ENCODE measurements at regions of chr10 and their contacts with region 1.

Region 1: GRCh38 chr10:16817125-16818019 is at the start of gene RSU1:
- DNase-seq: peak; percentile 97
- CTCF ChIP-seq: no peak

Region 2: DNA sequence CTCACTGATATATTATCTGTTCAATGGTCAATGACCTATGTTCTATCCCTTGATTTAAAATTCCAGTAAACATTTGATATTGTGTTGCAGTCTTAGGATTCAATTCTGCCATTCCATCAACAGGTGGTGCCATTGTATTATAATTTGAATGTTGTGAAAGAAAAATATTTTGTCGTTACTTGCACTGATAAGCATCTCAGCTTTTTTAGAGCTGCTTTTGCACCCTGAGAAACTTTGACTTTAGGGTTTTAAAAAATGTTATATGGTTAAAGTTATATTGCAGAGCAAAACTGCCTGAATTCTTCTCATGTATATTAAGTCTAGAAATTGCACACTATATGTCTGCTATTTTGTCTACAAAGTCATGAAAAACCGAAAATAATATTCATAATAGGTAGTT is 938.3 kb before region 1 on chr10:
- in situ Hi-C with region 1: loop called (anchors 25 kb)
- DNase-seq: peak; percentile 37
- CTCF ChIP-seq: peak; percentile 52

Measured in GM13977 (cell line).